CD4-positive, alpha-beta memory T cell (primary cell): ENCODE measurements at regions of chr3 and their contacts with region 1.

Region 1: DNA sequence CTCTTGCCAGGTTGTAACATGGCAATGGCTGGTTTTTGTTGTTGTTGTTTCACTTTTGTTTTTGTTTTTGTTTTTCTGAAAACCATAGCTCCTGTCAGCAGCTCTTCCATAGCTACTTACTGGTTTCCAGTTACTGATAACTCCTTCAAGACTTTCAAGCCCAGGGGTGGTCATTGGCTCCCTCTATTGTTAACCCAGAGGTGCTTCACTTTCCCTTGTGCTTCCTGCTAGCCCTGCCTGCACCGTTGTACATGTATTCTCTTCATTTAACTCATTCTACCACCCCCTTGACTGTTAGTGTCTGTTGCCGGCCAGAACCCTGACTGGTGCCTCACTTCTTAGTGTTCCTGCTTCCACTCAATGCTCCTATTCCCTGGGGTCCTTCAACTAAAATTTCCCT is 4.2 kb upstream of the TRAT1 start:
- DNase-seq: peak; percentile 74 to 82 (median 77)
- H3K4me3 ChIP-seq: no peak overlapping the region
- H3K4me3 Mint-ChIP-seq: peak overlapping the region in 6 of 8 donors; percentile 15 to 60 (median 34)
- H3K27ac ChIP-seq: no peak overlapping the region
- H3K27ac Mint-ChIP-seq: peak overlapping the region; percentile 23 to 78 (median 73)
- H3K4me1 ChIP-seq: peaks cover 37% of the 10 kb centered on the region
- H3K4me1 Mint-ChIP-seq: peaks cover 23 to 42% (median 27%) of the 10 kb centered on the region in 4 donors
- H3K27me3 ChIP-seq: no peaks in the 10 kb centered on the region
- H3K27me3 Mint-ChIP-seq: no peaks in the 10 kb centered on the region

Region 2: GRCh38 chr3:107969994-107970819 is 848.2 kb before region 1 on chr3:
- CTCF ChIA-PET with region 1: no interaction called
- POLR2A ChIA-PET with region 1: no interaction called
- intact Hi-C with region 1: loop called (anchors 10 kb)
- DNase-seq: peak in 1 of 5 donors; percentile 36
- H3K4me3 ChIP-seq: no peak overlapping the region
- H3K4me3 Mint-ChIP-seq: peak overlapping the region in 5 of 8 donors; percentile 4 to 32 (median 17)
- H3K27ac ChIP-seq: no peak overlapping the region
- H3K27ac Mint-ChIP-seq: peak overlapping the region in 2 of 7 donors; percentile 2 to 43
- H3K4me1 ChIP-seq: peaks cover 10% of the 10 kb centered on the region
- H3K4me1 Mint-ChIP-seq: peaks cover 18 to 46% (median 29%) of the 10 kb centered on the region in 4 donors
- H3K27me3 ChIP-seq: no peaks in the 10 kb centered on the region
- H3K27me3 Mint-ChIP-seq: no peaks in the 10 kb centered on the region

Region 3: DNA sequence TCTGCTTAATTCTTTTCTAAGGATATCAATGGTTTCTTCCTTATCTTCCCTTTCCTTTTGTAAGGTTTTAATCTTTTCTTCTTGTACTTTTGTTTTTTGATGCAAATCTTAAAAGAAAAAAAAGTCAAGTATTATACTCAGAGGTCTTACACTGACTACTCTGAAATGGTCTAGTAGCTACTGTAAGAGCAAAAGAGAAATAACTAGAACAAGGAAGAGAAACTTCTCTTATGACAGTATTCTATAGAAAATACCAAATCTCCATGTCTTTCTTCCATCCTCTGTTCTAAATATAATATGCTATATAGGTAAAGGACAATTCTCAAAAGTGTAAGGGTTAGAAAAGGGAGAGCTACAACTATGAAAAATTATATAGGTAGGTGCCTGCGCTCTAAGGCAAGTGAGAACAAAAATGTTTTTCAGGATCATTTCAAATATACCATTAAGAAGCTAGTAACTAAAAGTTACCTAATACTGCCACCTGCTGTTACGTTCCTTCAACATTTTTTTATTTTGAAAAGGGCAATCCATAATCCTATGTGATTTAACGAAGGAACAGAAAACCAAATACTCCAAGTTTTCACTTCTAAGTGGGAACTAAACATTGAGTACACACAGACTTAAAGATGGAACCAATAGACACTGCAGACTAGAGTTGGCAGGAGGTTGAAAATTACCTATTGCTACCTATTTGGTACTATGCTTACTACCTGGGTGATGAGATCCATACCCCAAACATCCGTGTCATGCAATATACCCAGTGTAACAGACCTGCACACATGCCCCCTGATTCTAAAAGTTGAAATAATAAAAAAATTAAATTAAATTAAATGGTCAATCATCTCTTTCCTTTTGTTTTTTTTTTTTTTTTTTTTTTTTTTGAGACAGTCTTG is 265.9 kb before region 1 on chr3:
- CTCF ChIA-PET with region 1: interaction called, 14 read pairs
- POLR2A ChIA-PET with region 1: no interaction called
- intact Hi-C with region 1: loop called (anchors 1 kb)
- DNase-seq: peak in 4 of 5 donors; percentile 38 to 50 (median 39)
- H3K4me3 ChIP-seq: no peak overlapping the region
- H3K4me3 Mint-ChIP-seq: peak overlapping the region in 1 of 8 donors; percentile 14
- H3K27ac ChIP-seq: no peak overlapping the region
- H3K27ac Mint-ChIP-seq: peak overlapping the region in 2 of 7 donors; percentile 6 to 38
- H3K4me1 ChIP-seq: no peaks in the 10 kb centered on the region
- H3K4me1 Mint-ChIP-seq: peaks cover 4 to 7% (median 7%) of the 10 kb centered on the region in 4 donors
- H3K27me3 ChIP-seq: no peaks in the 10 kb centered on the region
- H3K27me3 Mint-ChIP-seq: no peaks in the 10 kb centered on the region

Region 4: GRCh38 chr3:108662130-108662738 is 156.2 kb before region 1 on chr3:
- CTCF ChIA-PET with region 1: interaction called, 127 read pairs
- POLR2A ChIA-PET with region 1: interaction called, 5 read pairs
- intact Hi-C with region 1: loop called (anchors 1 kb)
- DNase-seq: peak; percentile 47 to 77 (median 70)
- H3K4me3 ChIP-seq: no peak overlapping the region
- H3K4me3 Mint-ChIP-seq: peak overlapping the region in 1 of 8 donors; percentile 9
- H3K27ac ChIP-seq: no peak overlapping the region
- H3K27ac Mint-ChIP-seq: no peak overlapping the region
- H3K4me1 ChIP-seq: peaks cover 4% of the 10 kb centered on the region
- H3K4me1 Mint-ChIP-seq: peaks cover 7 to 16% (median 12%) of the 10 kb centered on the region in 4 donors
- H3K27me3 ChIP-seq: no peaks in the 10 kb centered on the region
- H3K27me3 Mint-ChIP-seq: no peaks in the 10 kb centered on the region

Region 5: GRCh38 chr3:108806316-108806715 is 12.1 kb before region 1 on chr3:
- CTCF ChIA-PET with region 1: interaction called, 43 read pairs
- POLR2A ChIA-PET with region 1: interaction called, 39 read pairs
- intact Hi-C with region 1: loop called (anchors 1 kb)
- DNase-seq: peak; percentile 80 to 90 (median 83)
- H3K4me3 ChIP-seq: no peak overlapping the region
- H3K4me3 Mint-ChIP-seq: peak overlapping the region in 7 of 8 donors; percentile 4 to 73 (median 57)
- H3K27ac ChIP-seq: peak overlapping the region; percentile 35
- H3K27ac Mint-ChIP-seq: peak overlapping the region; percentile 79 to 93 (median 91)
- H3K4me1 ChIP-seq: peaks cover 18% of the 10 kb centered on the region
- H3K4me1 Mint-ChIP-seq: peaks cover 15 to 27% (median 21%) of the 10 kb centered on the region in 4 donors
- H3K27me3 ChIP-seq: no peaks in the 10 kb centered on the region
- H3K27me3 Mint-ChIP-seq: no peaks in the 10 kb centered on the region

Region 6: DNA sequence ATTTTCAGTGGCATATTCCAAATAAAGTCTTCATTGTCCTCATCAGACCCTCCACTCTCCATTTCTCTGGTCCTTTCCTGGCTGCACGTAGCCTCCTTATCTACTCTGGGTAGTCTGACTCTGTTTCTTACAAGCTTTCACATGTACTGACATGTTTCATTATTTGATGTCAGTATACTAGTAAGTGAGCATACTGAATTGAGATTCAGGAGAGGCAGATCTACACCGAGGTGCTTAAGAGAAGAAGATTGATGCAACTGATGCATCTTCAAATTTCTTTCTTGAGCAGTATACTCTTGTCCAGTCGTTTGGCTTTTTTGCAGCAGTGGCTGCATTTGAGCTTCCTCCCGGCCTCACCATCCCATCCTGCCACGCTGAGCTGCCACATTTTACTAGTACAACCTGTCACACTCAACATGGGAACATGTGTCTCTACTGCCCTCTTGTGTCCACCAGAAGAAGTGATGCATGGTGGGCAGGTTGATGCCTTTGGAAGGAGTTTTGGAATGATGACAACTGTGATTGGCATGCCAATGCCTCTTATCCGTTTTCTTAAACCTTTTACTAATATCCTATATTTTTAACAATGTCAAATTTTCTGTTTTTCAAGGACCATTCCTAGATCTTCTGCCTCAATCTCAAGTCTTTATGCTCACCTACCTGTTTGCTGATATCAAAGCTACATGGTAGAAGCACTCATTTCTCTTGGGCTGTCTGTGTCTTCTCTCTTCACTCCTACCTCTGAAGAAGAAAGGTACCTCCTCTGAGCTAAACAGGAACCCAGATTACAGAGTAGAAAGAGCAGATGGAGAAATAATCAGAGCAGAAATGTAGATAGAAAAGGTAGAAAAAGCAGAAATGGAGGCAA is 96.6 kb after region 1 on chr3:
- CTCF ChIA-PET with region 1: interaction called, 149 read pairs
- POLR2A ChIA-PET with region 1: interaction called, 4 read pairs
- intact Hi-C with region 1: loop called (anchors 1 kb)
- DNase-seq: peak; percentile 73 to 75 (median 73)
- H3K4me3 ChIP-seq: no peak overlapping the region
- H3K4me3 Mint-ChIP-seq: peak overlapping the region in 7 of 8 donors; percentile 41 to 77 (median 61)
- H3K27ac ChIP-seq: no peak overlapping the region
- H3K27ac Mint-ChIP-seq: peak overlapping the region in 2 of 7 donors; percentile 29 to 66
- H3K4me1 ChIP-seq: peaks cover 9% of the 10 kb centered on the region
- H3K4me1 Mint-ChIP-seq: peaks cover 15 to 23% (median 16%) of the 10 kb centered on the region in 4 donors
- H3K27me3 ChIP-seq: no peaks in the 10 kb centered on the region
- H3K27me3 Mint-ChIP-seq: peaks cover 2 to 4% of the 10 kb centered on the region in 2 donors

Region 7: DNA sequence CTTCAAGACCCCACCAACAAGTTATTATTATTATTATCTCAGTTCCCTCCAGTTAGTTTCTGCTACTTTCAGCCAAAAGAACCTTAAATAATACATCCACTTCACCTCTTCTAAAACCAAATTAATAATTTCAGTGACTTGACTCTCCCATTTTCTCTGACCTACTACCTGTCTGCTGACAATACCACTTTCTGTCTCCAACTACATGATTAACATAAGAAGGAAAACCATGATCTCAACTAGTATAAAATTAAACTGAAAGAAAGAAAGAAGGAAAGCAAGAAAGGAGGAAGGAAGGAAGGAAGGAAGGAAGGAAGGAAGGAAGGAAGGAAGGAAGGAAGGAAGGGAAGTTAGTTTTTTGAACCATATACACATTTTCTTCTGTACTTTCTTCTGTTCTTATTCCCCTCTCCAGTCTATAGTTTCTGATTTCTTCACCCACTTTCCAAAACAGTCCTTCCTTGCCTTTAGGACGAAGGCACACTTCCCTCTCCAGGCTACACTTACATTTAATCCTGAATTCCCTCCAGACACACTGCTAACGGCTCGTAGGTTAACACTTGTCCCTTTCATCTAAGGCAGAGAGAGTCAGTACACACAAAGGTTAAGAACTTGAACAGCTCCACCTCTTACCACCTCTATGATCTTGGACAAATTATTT is 214.7 kb after region 1 on chr3:
- CTCF ChIA-PET with region 1: no interaction called
- POLR2A ChIA-PET with region 1: no interaction called
- intact Hi-C with region 1: no loop called
- DNase-seq: no peak
- H3K4me3 ChIP-seq: no peak overlapping the region
- H3K4me3 Mint-ChIP-seq: no peak overlapping the region
- H3K27ac ChIP-seq: no peak overlapping the region
- H3K27ac Mint-ChIP-seq: no peak overlapping the region
- H3K4me1 ChIP-seq: no peaks in the 10 kb centered on the region
- H3K4me1 Mint-ChIP-seq: no peaks in the 10 kb centered on the region
- H3K27me3 ChIP-seq: no peaks in the 10 kb centered on the region
- H3K27me3 Mint-ChIP-seq: peaks cover 0 to 6% of the 10 kb centered on the region in 2 donors

Region 8: GRCh38 chr3:110198717-110199587 is 1380.5 kb after region 1 on chr3:
- CTCF ChIA-PET with region 1: no interaction called
- POLR2A ChIA-PET with region 1: no interaction called
- intact Hi-C with region 1: no loop called
- DNase-seq: no peak
- H3K4me3 ChIP-seq: no peak overlapping the region
- H3K4me3 Mint-ChIP-seq: no peak overlapping the region
- H3K27ac ChIP-seq: no peak overlapping the region
- H3K27ac Mint-ChIP-seq: no peak overlapping the region
- H3K4me1 ChIP-seq: no peaks in the 10 kb centered on the region
- H3K4me1 Mint-ChIP-seq: no peaks in the 10 kb centered on the region
- H3K27me3 ChIP-seq: no peaks in the 10 kb centered on the region
- H3K27me3 Mint-ChIP-seq: no peaks in the 10 kb centered on the region